Breast epithelium (tissue), 4 donors: ENCODE measurements at regions of chr17 and their contacts with region 1.

Region 1: DNA sequence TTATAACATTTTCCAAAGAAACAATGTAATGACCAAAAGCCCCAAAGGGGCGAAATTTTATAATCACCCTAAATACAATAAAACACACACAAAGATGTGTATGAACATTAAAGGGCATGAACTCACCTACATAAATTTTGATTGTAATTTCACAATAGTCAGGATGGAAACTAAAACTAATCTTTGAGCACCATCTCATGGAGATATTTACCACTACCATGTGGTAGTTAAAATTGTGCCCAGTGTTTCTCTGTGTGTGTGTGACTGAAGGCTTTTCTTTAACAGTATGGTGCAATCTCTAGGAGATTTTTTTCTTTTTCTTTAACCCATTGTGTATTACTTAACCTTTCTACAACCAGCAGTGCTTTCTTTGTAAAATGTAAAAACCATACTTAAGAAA is 19.7 kb upstream of the MEIOC start:
- DNase-seq: no peak
- H3K4me3 ChIP-seq: no peak overlapping the region
- H3K27ac ChIP-seq: no peak overlapping the region
- H3K4me1 ChIP-seq: no peaks in the 10 kb centered on the region
- H3K27me3 ChIP-seq: no peaks in the 10 kb centered on the region
- CTCF ChIP-seq: peak in 1 of 3 donors; percentile 49
- POLR2A ChIP-seq: no peak

Region 2: GRCh38 chr17:43151880-43152456 is 1484.6 kb before region 1 on chr17:
- intact Hi-C with region 1: no loop called
- DNase-seq: no peak
- H3K4me3 ChIP-seq: no peak overlapping the region
- H3K27ac ChIP-seq: no peak overlapping the region
- H3K4me1 ChIP-seq: no peaks in the 10 kb centered on the region
- H3K27me3 ChIP-seq: no peaks in the 10 kb centered on the region
- CTCF ChIP-seq: no peak
- POLR2A ChIP-seq: no peak

Region 3: DNA sequence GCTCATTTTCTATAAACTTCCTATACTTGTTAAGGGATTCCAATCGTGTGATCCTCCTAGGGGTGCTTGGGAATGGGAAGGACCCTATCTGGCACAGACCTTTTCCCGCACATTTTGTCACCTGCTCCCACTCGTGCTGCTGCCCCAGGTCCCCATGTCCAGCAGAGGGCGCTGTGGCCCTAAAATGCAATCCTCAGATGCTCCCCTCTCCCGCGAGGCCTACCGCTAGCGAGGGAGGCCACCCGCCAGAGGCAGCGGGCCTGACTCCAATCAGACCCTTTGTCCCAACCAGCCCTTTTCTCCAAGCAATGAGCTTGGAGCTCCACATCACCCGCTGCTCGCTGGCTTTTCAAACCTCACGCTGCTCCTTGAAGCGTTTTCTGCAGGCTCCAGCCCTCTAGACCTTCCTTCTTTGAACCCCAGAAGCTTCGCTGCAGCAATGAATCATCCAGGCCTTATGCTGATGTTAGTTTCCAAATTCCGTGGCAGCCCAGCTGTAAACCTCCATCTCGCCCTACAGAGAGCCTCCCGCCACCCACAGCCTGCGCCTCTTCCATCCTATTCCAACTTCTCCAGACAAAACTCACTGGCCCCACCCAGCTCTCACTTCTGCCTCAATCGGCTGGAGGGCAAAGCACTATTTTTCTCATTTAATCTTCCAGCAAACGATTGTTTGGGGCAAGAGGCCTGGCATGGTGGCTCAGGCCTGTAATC is 102.9 kb before region 1 on chr17:
- intact Hi-C with region 1: loop called (anchors 5 kb)
- DNase-seq: peak; percentile 66 to 85
- H3K4me3 ChIP-seq: peak overlapping the region in 2 of 3 donors; percentile 3 to 45
- H3K27ac ChIP-seq: peak overlapping the region in 1 of 2 donors; percentile 61
- H3K4me1 ChIP-seq: no peaks in the 10 kb centered on the region
- H3K27me3 ChIP-seq: no peaks in the 10 kb centered on the region
- CTCF ChIP-seq: peak; percentile 82 to 92 (median 86)
- POLR2A ChIP-seq: no peak